ENCODE measurements at regions of chr13 and their contacts with region 1.

Region 1: GRCh38 chr13:49540552-49540951 is 44.8 kb downstream of the PHF11 start:
- DNase-seq: no peak
- ATAC-seq: no peak
- H3K4me3 ChIP-seq: no peak overlapping the region
- H3K27ac ChIP-seq: no peak overlapping the region
- H3K4me1 ChIP-seq: no peaks in the 10 kb centered on the region
- H3K27me3 ChIP-seq: no peaks in the 10 kb centered on the region
- CTCF ChIP-seq: no peak

Region 2: DNA sequence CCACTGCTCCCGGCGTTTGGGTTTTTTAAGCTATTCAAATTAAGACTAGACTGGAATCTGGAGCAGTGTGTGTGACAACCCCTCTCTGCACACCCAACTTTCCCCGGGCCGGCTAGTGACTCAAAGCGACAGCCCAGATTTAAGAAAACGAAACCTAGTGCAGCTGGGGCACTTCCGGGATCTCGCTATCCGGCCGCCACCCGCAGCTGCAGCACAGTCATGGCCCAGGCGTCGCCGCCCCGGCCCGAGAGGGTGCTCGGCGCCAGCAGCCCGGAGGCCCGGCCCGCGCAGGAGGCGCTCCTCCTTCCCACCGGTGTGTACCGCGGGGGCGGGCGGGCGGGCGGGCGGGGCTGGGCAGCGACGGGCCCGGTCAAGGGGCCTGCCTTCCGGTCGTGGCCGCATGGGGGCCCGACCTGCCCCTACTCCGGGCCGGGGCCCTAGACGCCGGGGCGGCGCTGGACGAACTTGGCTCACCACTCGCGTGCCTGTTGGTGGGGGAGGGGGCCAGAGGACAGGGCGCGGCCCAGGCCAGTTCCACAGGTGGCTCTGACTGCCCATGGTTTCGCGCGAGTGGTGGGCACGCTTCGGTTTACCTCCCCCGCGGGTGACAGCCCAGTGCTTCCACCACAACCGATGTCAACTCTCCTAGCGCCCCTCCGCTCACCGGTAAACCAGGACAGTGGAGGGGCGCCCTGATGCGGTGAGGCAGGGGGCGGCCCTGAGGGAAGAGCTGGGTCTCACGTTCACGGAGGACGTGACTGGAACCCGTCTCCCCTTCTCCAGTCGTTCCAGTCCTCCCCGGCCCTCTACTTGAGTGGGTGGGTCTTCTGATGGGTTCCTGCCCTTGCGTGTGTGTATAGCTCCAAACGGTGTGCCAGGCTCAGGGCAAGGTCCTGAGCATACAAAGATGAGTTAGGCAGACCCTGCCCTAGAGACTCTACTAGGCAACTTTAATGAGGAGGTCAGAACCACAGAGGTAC is 44.5 kb before region 1 on chr13 and contains the start of gene PHF11:
- intact Hi-C with region 1: loop called in 1 of 3 experiments (anchors 10 kb)
- DNase-seq: peak; percentile 82 to 93 (median 86)
- ATAC-seq: peak; percentile 83 to 91 (median 86)
- H3K4me3 ChIP-seq: peak within 1 kb of the TSS; percentile 24 to 60 (median 48)
- H3K27ac ChIP-seq: peak within 1 kb of the TSS; percentile 90 to 95 (median 92)
- H3K4me1 ChIP-seq: no peaks in the 10 kb centered on the region
- H3K27me3 ChIP-seq: no peaks in the 10 kb centered on the region
- CTCF ChIP-seq: peak in 2 of 4 donors; percentile 11 to 16
- total RNA-seq, gene PHF11: 14.5 to 28.2 (median 19.5) TPM

Measured in pancreas (tissue), 10 donors.